ENCODE measurements at regions of chr5 and their contacts with region 1.

Region 1: DNA sequence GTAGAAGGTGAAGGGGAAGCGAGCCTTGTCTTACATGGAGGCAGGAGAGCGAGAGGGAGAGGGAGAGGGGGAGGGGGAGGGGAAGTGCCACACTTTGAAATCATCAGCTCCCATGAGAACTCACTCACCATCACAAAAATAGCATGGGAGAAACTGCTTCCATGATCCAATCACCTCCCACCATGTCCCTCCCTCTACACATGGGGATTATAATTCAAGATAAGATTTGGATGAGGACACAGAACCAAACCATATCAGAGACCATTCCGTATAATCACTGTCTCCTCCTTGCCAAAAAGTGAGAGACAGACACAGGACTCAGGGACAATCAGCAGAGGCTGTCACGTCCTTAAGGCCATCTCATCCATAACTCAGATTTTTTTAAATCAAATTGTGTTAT is 187.7 kb upstream of the TAS2R1 start:
- DNase-seq: no peak
- ATAC-seq: no peak
- H3K4me3 Mint-ChIP-seq: no peak overlapping the region
- H3K27ac Mint-ChIP-seq: no peak overlapping the region
- H3K4me1 Mint-ChIP-seq: no peaks in the 10 kb centered on the region
- H3K27me3 Mint-ChIP-seq: no peaks in the 10 kb centered on the region

Region 2: GRCh38 chr5:9895302-9895645 is 77.5 kb after region 1 on chr5:
- CTCF ChIA-PET with region 1: no interaction called
- POLR2A ChIA-PET with region 1: no interaction called
- intact Hi-C with region 1: loop called in 1 of 2 experiments (anchors 2 kb)
- DNase-seq: no peak
- ATAC-seq: no peak
- H3K4me3 Mint-ChIP-seq: no peak overlapping the region
- H3K27ac Mint-ChIP-seq: no peak overlapping the region
- H3K4me1 Mint-ChIP-seq: no peaks in the 10 kb centered on the region
- H3K27me3 Mint-ChIP-seq: no peaks in the 10 kb centered on the region